ENCODE measurements at regions of chr6 and their contacts with region 1.

Region 1: GRCh38 chr6:138012682-138013081 is 94.5 kb downstream of the PERP start:
- DNase-seq: no peak
- H3K4me3 ChIP-seq: no peak overlapping the region
- H3K27ac ChIP-seq: no peak overlapping the region
- H3K4me1 ChIP-seq: no peaks in the 10 kb centered on the region
- H3K27me3 ChIP-seq: no peaks in the 10 kb centered on the region
- CTCF ChIP-seq: no peak

Region 2: DNA sequence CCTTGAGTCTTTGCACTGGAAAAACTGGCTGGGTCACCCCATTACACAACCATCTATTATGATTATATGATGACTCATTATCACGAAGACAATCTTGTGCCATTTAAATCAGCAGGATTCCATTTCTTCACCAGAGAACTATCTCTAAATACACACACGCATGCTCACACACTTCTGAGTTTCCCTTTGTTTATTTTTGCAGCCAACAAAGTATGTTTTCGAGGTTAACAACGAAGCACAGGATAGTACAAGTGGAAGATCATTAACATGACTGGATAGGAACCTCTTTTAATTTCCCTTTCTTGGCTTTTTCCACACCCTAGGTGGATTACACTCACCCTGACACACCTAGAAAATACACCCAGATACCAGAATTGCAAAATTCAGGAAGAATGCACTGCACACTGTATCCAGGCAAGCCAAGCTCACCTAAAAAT is 75.7 kb after region 1 on chr6:
- intact Hi-C with region 1: loop called (anchors 10 kb)
- DNase-seq: peak in 1 of 2 donors; percentile 25
- H3K4me3 ChIP-seq: no peak overlapping the region
- H3K27ac ChIP-seq: no peak overlapping the region
- H3K4me1 ChIP-seq: peaks cover 0 to 14% (median 0%) of the 10 kb centered on the region in 4 donors
- H3K27me3 ChIP-seq: no peaks in the 10 kb centered on the region
- CTCF ChIP-seq: no peak